Activated CD4-positive, alpha-beta T cell treated with anti-CD3 and anti-CD28 coated beads, Interleukin-2, amount 10 ng/mL, durations not matched to agents 24 days and 14 days (primary cell): ENCODE measurements at regions of chr12 and their contacts with region 1.

Region 1: DNA sequence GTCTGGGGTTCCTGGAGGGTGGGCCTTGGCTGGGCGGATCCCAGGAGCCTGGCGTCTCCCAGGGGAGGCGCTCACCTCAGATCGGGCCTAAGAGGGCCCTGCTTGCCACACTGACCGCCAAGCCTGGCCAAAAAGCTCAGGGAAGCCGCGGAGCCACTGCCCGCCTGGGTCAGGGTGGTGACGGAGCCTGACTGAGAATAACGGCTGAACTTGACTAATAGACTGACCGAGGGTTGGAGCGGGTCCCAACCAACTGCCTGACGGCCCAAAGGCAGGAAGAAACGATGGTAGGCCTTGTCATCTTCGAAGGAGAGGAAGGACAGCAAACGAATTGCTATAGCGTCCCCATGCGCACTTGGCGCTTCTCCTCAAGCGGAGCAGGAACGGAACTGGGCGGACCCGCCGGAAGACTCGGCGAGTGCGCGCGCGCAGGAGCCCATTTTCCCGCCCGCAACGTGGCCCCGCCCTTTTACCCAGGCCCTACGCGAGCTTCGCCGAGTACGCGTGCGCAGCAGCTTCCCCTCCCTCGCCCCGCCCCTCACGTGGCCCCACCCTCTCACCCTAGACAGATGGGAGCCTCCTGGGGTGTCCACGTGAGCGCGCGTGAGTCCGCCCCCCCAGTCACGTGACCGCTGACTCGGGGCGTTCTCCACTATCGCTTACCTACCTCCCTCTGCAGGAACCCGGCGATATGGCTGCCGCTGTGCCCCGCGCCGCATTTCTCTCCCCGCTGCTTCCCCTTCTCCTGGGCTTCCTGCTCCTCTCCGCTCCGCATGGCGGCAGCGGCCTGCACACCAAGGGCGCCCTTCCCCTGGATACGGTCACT is at the starts of genes ERP29 and TMEM116:
- DNase-seq: peak; percentile 100
- H3K4me3 Mint-ChIP-seq: peak within 1 kb of the TSS; percentile 93
- H3K27ac Mint-ChIP-seq: peak within 1 kb of the TSS; percentile 98
- H3K4me1 Mint-ChIP-seq: peaks cover 42% of the 10 kb centered on the region
- H3K27me3 Mint-ChIP-seq: no peaks in the 10 kb centered on the region
- total RNA-seq, gene ERP29: 56.6 and 60.9 TPM in 2 replicates
- total RNA-seq, gene TMEM116: 9.7 and 11.1 TPM in 2 replicates

Region 2: DNA sequence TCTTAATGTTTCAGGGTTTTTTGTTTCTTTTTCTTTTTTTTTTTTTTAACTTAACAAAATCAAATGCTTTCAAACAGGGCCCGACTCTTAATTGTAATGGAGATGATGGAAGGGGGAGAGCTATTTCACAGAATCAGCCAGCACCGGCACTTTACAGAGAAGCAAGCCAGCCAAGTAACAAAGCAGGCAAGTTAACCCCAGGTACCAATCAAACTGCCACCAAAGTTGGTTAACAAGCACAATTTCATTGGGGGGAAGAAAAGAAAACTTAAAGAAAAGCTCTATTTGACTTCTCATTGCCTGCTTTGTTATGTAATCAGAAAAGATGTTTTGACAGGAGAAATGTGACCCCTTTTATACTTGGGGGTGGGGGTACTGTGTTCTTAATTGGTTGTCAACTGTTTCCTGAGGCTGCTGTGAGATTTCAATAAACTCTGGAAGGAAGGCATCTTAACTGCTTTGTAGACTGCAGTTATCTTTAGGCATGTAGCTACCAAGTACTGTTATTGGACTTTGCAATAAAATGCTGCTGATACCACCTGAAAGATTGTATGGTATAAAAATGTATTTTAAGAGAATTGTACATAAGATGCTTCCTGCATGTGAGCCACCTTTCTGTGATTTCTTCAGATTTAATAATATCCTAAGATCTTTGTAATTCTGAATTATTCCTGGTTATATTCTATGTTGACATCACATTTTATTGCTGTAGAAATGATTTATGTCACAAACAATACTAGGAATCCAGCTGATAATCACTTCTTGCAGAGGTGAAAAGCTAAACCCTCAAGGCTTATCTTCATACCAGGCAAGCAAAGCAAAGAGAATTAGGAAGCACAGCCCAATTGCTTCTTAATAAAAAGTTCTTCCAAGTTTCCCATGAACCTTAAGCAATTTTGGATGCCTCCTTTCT is 144.1 kb before region 1 on chr12:
- intact Hi-C with region 1: no loop called
- DNase-seq: no peak
- H3K4me3 Mint-ChIP-seq: no peak overlapping the region
- H3K27ac Mint-ChIP-seq: no peak overlapping the region
- H3K4me1 Mint-ChIP-seq: peaks cover 2% of the 10 kb centered on the region
- H3K27me3 Mint-ChIP-seq: no peaks in the 10 kb centered on the region

Region 3: DNA sequence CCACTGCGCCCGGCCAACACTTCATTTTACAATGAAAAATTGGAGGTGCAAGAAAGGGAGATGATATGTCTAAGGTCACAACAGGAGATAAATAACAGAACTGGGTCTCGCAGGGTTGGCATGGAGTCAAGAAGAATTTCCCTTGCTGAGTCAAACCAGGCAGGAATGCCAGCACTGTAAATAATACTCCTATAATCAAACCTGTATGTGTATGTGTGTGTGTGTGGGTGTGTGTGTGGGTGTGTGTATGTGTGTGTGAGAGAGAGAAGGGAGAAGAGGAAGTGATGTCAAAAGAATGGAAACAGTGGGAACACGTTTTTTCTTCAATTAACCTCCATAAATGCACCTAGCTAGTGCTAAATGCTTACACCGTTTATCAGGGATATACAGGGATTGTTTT is 70.4 kb before region 1 on chr12:
- intact Hi-C with region 1: loop called (anchors 1 kb)
- DNase-seq: no peak
- H3K4me3 Mint-ChIP-seq: no peak overlapping the region
- H3K27ac Mint-ChIP-seq: peak overlapping the region; percentile 77
- H3K4me1 Mint-ChIP-seq: peaks cover 13% of the 10 kb centered on the region
- H3K27me3 Mint-ChIP-seq: no peaks in the 10 kb centered on the region

Region 4: DNA sequence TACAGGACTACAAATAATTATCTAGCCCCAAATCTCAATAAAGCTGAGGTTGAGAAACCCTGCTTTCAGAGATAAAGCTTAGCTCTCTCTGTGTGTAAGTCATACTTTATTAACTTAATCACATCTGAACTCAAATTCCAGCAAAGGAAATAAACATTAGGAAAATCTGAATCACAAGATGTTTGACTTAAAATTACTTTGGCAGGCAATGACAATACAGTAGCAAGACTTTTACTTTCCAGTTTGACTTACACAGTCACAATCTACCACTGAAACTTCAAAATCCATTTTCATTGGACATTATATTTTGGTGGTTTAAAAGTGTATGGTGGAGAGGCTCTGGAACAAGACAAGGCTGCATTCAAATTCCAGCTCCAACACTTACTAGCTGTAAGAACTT is 11.4 kb before region 1 on chr12:
- intact Hi-C with region 1: loop called (anchors 1 kb)
- DNase-seq: no peak
- H3K4me3 Mint-ChIP-seq: peak overlapping the region; percentile 53
- H3K27ac Mint-ChIP-seq: peak overlapping the region; percentile 72
- H3K4me1 Mint-ChIP-seq: peaks cover 45% of the 10 kb centered on the region
- H3K27me3 Mint-ChIP-seq: no peaks in the 10 kb centered on the region

Region 5: GRCh38 chr12:112046003-112046402 is 33.0 kb after region 1 on chr12:
- intact Hi-C with region 1: no loop called
- DNase-seq: no peak
- H3K4me3 Mint-ChIP-seq: no peak overlapping the region
- H3K27ac Mint-ChIP-seq: peak overlapping the region; percentile 22
- H3K4me1 Mint-ChIP-seq: peaks cover 6% of the 10 kb centered on the region
- H3K27me3 Mint-ChIP-seq: no peaks in the 10 kb centered on the region

Region 6: DNA sequence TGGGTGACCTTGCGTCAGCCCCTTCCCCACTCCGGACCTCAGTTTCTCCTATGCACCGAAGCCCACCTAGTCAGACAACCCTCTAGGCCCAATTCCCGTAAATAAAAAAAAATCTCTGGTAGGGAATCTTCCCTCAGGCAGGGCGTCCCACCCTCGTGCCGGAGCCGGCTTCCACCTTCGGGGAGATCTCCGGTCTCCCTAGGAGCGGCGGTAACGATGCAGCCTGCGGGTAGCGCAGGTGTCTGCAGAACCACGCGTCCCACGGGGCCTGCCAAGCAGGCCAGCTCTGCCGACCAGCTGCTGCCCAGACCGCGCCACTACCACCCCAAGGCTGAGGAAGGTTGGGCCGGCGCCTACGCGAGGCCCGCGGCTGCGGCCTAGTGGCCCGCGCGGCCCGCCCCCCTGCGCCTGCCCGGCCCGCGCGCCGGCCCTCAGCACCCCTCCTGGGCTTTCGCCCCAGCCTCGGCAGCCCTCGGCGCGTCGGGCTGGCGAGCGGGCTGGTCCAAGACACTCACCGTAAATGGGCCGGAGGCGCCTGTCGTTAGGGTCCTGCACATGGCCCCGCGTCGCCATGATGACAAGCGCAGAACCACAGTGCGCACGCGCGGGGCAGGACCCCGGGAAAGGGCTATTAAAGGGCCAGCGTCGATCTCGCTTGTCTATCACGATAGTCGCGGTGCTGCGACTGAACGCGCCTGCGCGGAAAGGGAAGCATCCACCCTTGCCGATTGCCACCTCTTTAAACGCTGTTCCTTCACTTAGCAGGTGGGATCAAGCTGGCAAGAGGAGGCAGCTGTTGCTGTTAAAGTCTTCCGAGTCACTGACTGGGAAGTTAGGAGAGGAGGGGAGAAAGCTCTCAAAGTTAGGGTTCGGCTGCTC is 95.5 kb after region 1 on chr12 and contains the start of gene NAA25:
- intact Hi-C with region 1: loop called (anchors 1 kb)
- DNase-seq: peak; percentile 96
- H3K4me3 Mint-ChIP-seq: peak within 1 kb of the TSS; percentile 97
- H3K27ac Mint-ChIP-seq: peak within 1 kb of the TSS; percentile 98
- H3K4me1 Mint-ChIP-seq: peaks cover 38% of the 10 kb centered on the region
- H3K27me3 Mint-ChIP-seq: no peaks in the 10 kb centered on the region
- total RNA-seq, gene NAA25: 60.0 and 62.1 TPM in 2 replicates

Region 7: DNA sequence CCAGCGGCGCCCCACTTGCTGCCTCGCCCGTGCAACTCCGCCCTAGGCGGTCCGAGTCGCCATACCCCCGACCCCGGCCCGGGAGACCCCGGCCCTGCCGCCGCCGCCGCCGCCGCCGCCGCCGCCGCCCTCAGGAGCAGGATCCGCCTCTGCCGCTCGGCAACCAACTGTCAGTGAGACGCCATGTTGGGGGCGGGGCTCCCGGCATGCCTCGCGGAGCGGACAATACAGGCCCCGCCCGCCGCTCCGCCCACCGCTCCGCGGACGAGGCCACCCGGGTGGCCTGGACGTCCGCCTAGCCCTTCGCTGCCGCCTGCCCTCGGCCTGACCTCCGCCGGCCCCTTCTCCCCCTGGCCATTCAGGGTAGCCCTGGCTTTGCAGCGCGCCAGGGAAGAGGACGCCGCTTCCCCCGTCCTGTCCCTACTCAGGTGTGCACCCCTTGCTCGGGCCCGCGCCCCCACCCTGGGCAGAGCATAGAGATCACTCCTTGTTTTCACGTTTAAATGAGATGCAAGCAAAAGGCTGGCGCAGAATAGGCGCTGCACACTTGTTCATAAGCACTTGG is 369.3 kb after region 1 on chr12 and contains the start of gene HECTD4:
- intact Hi-C with region 1: loop called (anchors 2 kb)
- DNase-seq: peak; percentile 99
- H3K4me3 Mint-ChIP-seq: peak within 1 kb of the TSS; percentile 95
- H3K27ac Mint-ChIP-seq: peak within 1 kb of the TSS; percentile 91
- H3K4me1 Mint-ChIP-seq: peaks cover 31% of the 10 kb centered on the region
- H3K27me3 Mint-ChIP-seq: no peaks in the 10 kb centered on the region
- total RNA-seq, gene HECTD4: 33.6 and 33.8 TPM in 2 replicates